Activated CD4-positive, alpha-beta T cell treated with anti-CD3 and anti-CD28 coated beads, Interleukin-2, amount 10 ng/mL, durations not matched to agents 24 days and 14 days (primary cell): ENCODE measurements at regions of chr2 and their contacts with region 1.

Region 1: GRCh38 chr2:98731041-98731893 is at the start of gene MGAT4A:
- DNase-seq: peak; percentile 95
- H3K4me3 Mint-ChIP-seq: peak within 1 kb of the TSS; percentile 84
- H3K27ac Mint-ChIP-seq: peak within 1 kb of the TSS; percentile 88
- H3K4me1 Mint-ChIP-seq: peaks cover 60% of the 10 kb centered on the region
- H3K27me3 Mint-ChIP-seq: no peaks in the 10 kb centered on the region
- total RNA-seq, gene MGAT4A: 48.8 and 49.2 TPM in 2 replicates

Region 2: GRCh38 chr2:98658816-98659490 is 72.3 kb before region 1 on chr2:
- intact Hi-C with region 1: loop called (anchors 1 kb)
- DNase-seq: peak; percentile 77
- H3K4me3 Mint-ChIP-seq: peak overlapping the region; percentile 82
- H3K27ac Mint-ChIP-seq: peak overlapping the region; percentile 95
- H3K4me1 Mint-ChIP-seq: peaks cover 65% of the 10 kb centered on the region
- H3K27me3 Mint-ChIP-seq: no peaks in the 10 kb centered on the region

Region 3: DNA sequence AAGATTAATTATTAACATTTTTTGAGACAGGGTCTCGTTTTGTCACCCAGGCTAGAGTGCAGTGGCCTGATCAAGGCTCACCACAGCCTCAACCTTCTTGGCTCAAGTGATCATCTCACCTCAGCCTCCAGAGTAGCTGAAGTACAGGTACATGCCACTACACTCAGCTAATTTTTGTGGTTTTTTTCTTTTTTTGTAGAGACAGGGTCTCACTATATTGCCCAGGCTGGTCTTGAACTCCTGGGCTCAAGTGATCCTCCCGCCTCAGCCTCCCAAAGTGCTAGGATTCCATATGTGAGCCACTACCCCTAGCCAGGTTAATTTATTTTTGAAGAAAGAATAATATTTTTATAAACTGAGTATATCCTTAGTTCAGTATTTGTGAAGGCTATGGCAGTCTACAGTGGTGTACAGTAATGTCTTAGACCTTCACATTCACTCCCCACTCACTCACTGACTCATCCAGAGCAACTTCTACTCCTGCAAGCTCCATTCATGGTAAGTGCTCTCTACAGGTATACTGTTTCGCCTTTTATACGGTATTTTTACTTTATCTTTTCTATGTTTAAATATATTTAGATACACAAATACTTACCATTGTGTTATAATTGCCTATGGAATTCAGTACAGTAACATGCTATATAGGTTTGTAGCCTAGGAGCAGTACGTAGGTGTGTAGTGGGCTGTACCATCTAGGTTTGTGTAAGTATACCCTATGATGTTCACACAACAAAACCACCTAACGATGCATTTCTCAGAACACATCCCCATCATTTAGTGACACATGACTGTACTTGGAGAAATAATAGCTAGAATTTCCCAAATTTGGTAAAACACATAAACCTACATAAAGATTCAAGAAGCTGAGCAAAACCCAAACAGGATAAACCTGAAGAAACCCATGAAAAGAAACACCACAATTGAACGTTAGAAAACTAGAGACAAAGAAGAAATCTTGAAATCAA is 38.9 kb before region 1 on chr2:
- intact Hi-C with region 1: loop called (anchors 2 kb)
- DNase-seq: no peak
- H3K4me3 Mint-ChIP-seq: peak overlapping the region; percentile 53
- H3K27ac Mint-ChIP-seq: peak overlapping the region; percentile 83
- H3K4me1 Mint-ChIP-seq: peaks cover 59% of the 10 kb centered on the region
- H3K27me3 Mint-ChIP-seq: no peaks in the 10 kb centered on the region

Region 4: DNA sequence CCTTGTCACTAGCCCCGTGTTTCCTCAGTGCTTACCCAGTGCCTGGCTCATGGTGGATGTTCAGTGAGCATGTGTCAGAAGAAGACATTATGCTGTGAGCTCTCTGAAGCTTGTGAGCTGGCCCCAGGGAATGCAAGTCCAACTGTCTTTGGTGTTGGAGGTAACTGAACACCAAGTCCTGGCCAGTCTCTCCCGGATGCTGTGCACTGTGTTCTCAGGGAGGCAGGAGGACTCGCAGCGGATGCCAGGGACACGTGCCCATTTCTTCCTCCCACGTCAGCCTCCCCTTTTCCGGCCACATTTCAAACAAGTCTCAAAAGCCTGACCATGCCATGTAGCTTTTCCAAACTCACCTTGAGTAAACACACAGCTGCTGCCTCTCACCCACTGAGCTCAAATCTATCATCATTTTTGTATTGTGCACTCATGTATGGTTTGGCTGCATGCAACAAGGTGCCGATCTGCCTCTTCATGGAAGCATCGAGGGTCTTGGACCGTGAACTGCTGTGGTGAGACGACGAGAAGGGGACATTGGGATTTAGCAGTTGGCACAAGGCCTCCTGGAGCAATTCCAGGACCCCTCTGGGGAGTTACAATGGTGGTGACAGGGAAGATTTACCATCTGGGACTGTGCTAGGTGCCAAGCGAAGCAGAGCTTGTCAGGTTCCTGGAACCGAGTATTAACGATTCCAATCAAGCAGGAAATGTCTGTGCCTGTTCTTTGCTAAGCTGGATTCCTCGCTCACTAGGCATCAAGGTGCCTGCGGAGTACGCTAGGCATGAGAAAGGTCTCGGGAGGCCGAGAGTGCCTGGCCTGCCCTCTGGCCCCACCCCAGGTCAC is 44.1 kb after region 1 on chr2:
- intact Hi-C with region 1: no loop called
- DNase-seq: no peak
- H3K4me3 Mint-ChIP-seq: no peak overlapping the region
- H3K27ac Mint-ChIP-seq: no peak overlapping the region
- H3K4me1 Mint-ChIP-seq: peaks cover 34% of the 10 kb centered on the region
- H3K27me3 Mint-ChIP-seq: no peaks in the 10 kb centered on the region

Region 5: DNA sequence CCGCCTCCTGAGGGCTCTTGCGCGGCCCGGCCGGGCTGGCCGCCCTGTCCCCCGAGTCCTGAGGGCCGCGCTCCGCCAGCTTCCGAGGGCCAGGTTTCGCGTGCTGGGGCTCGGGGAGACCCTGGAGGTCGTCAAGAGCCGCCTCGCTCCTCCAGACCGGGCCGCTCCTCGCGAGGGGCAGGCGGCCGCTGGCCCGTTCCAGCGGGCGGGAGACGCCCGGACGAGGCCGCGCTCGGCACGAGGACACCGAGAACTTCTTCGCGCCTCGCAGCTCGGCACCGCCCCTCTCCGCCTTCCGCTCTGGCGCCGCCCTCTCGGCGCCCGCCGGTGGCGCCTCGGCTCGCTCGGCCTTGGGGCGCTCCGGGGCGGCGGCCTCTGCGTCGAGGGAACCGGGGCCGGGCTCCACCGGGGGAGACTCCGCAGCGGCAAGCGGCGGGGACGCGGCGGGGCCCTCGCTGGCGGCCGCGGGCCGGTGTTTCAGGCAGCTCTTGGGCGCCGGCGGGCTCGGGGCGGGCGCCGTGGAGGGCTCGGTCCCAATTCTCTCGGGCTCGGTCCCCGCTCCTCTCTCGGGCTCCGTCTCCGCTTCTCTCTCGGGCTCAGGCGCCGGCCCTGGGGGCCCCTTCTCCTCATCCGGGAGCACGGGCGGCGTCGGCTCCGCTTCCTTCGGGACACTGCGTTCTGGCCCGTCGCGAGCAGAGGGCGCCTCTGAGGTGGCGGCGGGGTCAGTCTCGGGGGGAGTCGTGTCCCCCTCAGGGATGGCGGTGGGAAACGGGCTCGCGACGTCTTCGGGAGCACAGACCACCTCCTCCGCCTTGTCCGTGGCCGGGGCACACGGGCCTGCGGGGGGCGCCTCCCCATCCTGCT is 91.3 kb after region 1 on chr2:
- intact Hi-C with region 1: loop called (anchors 5 kb)
- DNase-seq: peak; percentile 92
- H3K4me3 Mint-ChIP-seq: peak overlapping the region; percentile 74
- H3K27ac Mint-ChIP-seq: no peak overlapping the region
- H3K4me1 Mint-ChIP-seq: peaks cover 10% of the 10 kb centered on the region
- H3K27me3 Mint-ChIP-seq: peaks cover 5% of the 10 kb centered on the region